Esophagus muscularis mucosa (tissue), 4 donors: ENCODE measurements at regions of chr1 and their contacts with region 1.

Region 1: GRCh38 chr1:208245185-208245705 is 1.1 kb upstream of the PLXNA2 start:
- DNase-seq: peak; percentile 97
- H3K4me3 ChIP-seq: peak overlapping the region; percentile 72 to 98 (median 88)
- H3K27ac ChIP-seq: peak overlapping the region; percentile 87 to 94 (median 92)
- H3K4me1 ChIP-seq: peaks cover 21 to 45% (median 40%) of the 10 kb centered on the region in 4 donors
- H3K27me3 ChIP-seq: no peaks in the 10 kb centered on the region
- CTCF ChIP-seq: peak; percentile 85 to 91 (median 87)
- EP300 ChIP-seq: no peak
- POLR2A ChIP-seq: peak; percentile 6

Region 2: DNA sequence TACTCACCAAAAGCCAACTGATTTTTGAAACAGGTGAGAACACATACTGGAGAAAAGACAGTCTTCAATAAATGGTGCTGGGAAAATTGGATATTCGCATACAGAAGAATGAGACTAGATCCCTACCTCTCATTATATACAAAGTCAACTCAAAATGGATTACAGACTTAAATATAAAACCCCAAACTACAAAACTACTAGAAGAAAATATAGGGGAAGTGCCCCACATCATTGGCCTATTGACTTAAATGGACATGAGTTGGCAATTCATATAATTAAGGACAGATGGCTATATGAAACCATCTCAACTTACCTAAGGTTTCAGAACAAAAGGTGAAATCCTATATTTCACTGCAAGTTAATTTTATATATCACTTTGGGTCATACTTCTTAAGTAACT is 1081.2 kb before region 1 on chr1:
- intact Hi-C with region 1: no loop called
- DNase-seq: no peak
- H3K4me3 ChIP-seq: no peak overlapping the region
- H3K27ac ChIP-seq: no peak overlapping the region
- H3K4me1 ChIP-seq: no peaks in the 10 kb centered on the region
- H3K27me3 ChIP-seq: no peaks in the 10 kb centered on the region
- CTCF ChIP-seq: no peak
- EP300 ChIP-seq: no peak
- POLR2A ChIP-seq: no peak

Region 3: GRCh38 chr1:208025031-208025430 is 220.2 kb before region 1 on chr1:
- intact Hi-C with region 1: loop called (anchors 2 kb)
- DNase-seq: no peak
- H3K4me3 ChIP-seq: no peak overlapping the region
- H3K27ac ChIP-seq: no peak overlapping the region
- H3K4me1 ChIP-seq: peaks cover 5 to 26% (median 19%) of the 10 kb centered on the region in 4 donors
- H3K27me3 ChIP-seq: no peaks in the 10 kb centered on the region
- CTCF ChIP-seq: no peak
- EP300 ChIP-seq: no peak
- POLR2A ChIP-seq: no peak

Region 4: GRCh38 chr1:208081972-208082371 is 163.3 kb before region 1 on chr1:
- intact Hi-C with region 1: loop called (anchors 5 kb)
- DNase-seq: no peak
- H3K4me3 ChIP-seq: no peak overlapping the region
- H3K27ac ChIP-seq: no peak overlapping the region
- H3K4me1 ChIP-seq: peaks cover 11 to 25% (median 15%) of the 10 kb centered on the region in 4 donors
- H3K27me3 ChIP-seq: no peaks in the 10 kb centered on the region
- CTCF ChIP-seq: peak in 1 of 3 experiments; percentile 10
- EP300 ChIP-seq: no peak
- POLR2A ChIP-seq: no peak

Region 5: DNA sequence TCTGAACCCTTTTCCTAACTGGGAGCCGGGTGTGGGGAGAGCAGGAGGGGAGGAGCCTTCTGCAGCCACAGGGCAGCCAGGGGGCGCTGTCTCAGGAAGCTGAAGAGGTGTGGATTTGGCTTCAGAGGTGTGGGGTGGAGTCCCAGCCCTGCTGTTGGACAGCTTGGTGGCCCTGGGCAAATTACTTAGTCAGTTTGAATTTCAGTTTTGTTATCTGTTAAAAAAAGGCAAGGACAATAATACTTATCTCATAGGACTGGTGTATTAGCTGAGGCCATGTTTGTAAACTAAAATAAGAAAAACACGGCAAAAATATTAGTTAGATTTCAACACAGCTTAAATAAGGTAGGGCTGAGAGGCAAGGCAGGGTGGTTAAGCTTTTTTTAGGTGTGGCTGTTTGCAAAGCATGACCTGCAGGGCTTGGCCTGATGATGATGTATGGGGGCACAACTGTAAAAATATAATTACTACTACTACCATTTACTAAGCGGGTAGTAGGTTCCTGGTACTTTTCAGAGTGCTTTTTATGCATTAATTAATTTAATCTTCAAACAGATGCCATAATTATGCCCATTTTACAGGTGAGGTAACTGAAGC is 112.9 kb before region 1 on chr1:
- intact Hi-C with region 1: loop called (anchors 2 kb)
- DNase-seq: peak; percentile 95
- H3K4me3 ChIP-seq: no peak overlapping the region
- H3K27ac ChIP-seq: peak overlapping the region in 2 of 4 donors; percentile 51 to 56
- H3K4me1 ChIP-seq: peaks cover 23 to 84% (median 66%) of the 10 kb centered on the region in 4 donors
- H3K27me3 ChIP-seq: no peaks in the 10 kb centered on the region
- CTCF ChIP-seq: peak; percentile 86 to 88 (median 87)
- EP300 ChIP-seq: no peak
- POLR2A ChIP-seq: no peak